ENCODE measurements at regions of chr7 and their contacts with region 1.

Region 1: DNA sequence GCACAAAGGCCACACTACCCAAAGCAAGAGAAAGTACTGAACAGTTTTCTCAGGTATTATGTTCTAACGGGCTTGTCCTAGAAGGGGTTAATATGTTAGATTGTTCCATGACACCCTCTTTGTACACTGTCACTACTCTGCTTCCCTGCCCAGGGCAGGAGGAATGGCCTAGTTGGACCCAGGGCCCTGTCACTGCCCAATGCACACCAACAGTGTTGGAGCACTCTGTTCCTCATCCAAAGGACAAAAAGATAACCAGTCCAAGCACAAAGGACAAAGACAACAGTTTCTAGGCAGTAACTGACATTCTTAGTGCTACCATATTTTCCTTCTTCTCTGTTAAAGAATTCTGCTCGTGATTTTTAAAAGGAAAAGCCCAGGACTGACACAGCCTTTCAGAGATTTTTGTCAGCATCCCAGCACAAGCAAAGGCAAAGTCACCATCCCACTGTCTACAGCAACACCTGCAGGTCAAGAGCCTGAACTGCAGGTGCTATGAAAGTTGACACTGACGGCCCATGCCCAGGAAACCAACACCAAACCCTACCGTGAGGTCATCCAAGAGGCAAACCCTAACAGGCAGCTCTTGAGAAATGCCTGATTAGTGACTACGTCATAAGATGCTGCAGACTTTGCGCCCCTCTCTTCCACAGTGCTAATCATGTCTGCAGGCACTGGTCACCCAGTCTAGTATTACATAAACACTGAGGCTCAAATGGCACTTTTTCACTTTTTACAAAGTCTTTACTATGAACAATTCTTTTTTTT is 13.2 kb downstream of the NUDCD3 start:
- DNase-seq: peak; percentile 18 to 68 (median 58)
- ATAC-seq: peak; percentile 98
- H3K4me3 ChIP-seq: no peak overlapping the region
- H3K4me3 Mint-ChIP-seq: peak overlapping the region in 5 of 10 donors; percentile 1 to 32 (median 4)
- H3K27ac ChIP-seq: no peak overlapping the region
- H3K27ac Mint-ChIP-seq: peak overlapping the region in 7 of 9 donors; percentile 2 to 93 (median 78)
- H3K4me1 ChIP-seq: peaks cover 0 to 15% of the 10 kb centered on the region in 2 donors
- H3K4me1 Mint-ChIP-seq: peaks cover 26 to 86% (median 71%) of the 10 kb centered on the region in 7 donors
- H3K27me3 ChIP-seq: no peaks in the 10 kb centered on the region
- H3K27me3 Mint-ChIP-seq: no peaks in the 10 kb centered on the region

Region 2: GRCh38 chr7:44072364-44073231 is 404.6 kb before region 1 on chr7:
- CTCF ChIA-PET with region 1: no interaction called
- POLR2A ChIA-PET with region 1: no interaction called
- intact Hi-C with region 1: loop called in 1 of 2 experiments (anchors 5 kb)
- DNase-seq: peak in 2 of 9 donors; percentile 26 to 36
- ATAC-seq: peak; percentile 46
- H3K4me3 ChIP-seq: no peak overlapping the region
- H3K4me3 Mint-ChIP-seq: no peak overlapping the region
- H3K27ac ChIP-seq: no peak overlapping the region
- H3K27ac Mint-ChIP-seq: peak overlapping the region in 7 of 9 donors; percentile 9 to 77 (median 60)
- H3K4me1 ChIP-seq: no peaks in the 10 kb centered on the region
- H3K4me1 Mint-ChIP-seq: peaks cover 2 to 34% (median 18%) of the 10 kb centered on the region in 7 donors
- H3K27me3 ChIP-seq: no peaks in the 10 kb centered on the region
- H3K27me3 Mint-ChIP-seq: no peaks in the 10 kb centered on the region

Region 3: GRCh38 chr7:44213877-44214388 is 263.3 kb before region 1 on chr7:
- CTCF ChIA-PET with region 1: no interaction called
- POLR2A ChIA-PET with region 1: no interaction called
- intact Hi-C with region 1: loop called in 1 of 2 experiments (anchors 1 kb)
- DNase-seq: no peak
- ATAC-seq: no peak
- H3K4me3 ChIP-seq: no peak overlapping the region
- H3K4me3 Mint-ChIP-seq: no peak overlapping the region
- H3K27ac ChIP-seq: no peak overlapping the region
- H3K27ac Mint-ChIP-seq: peak overlapping the region in 3 of 9 donors; percentile 4 to 36 (median 14)
- H3K4me1 ChIP-seq: no peaks in the 10 kb centered on the region
- H3K4me1 Mint-ChIP-seq: peaks cover 0 to 1% (median 0%) of the 10 kb centered on the region in 7 donors
- H3K27me3 ChIP-seq: no peaks in the 10 kb centered on the region
- H3K27me3 Mint-ChIP-seq: no peaks in the 10 kb centered on the region

Region 4: DNA sequence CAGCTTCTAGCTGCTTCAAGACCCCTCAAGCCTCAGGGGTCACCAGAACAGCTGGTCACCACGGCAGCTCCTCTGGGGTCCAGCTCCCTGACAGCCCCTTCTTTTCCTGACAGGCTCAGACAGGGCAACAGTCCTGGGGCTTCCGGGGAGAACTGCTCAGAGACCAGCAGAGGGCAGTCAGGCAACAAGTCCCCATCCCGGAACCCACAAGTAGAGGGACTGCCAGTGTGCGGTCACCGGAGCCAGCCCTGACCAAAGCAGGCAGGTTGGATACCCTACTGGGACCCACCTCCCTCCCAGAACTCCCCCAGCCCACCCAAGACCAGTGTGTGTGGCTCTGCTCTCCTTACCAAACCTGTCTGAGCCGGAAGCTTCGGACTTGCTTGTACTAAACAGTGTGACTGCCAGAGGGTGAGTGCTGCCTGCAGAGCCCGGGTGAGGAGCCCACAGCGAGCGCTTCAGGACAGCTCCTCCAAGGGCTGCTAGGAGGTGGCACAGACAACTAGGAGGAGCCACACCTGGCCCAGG is 236.2 kb before region 1 on chr7:
- CTCF ChIA-PET with region 1: interaction called, 8 read pairs
- POLR2A ChIA-PET with region 1: no interaction called
- intact Hi-C with region 1: loop called (anchors 1 kb)
- DNase-seq: peak; percentile 40 to 70 (median 66)
- ATAC-seq: peak; percentile 81
- H3K4me3 ChIP-seq: peak overlapping the region; percentile 27
- H3K4me3 Mint-ChIP-seq: peak overlapping the region in 8 of 10 donors; percentile 37 to 69 (median 50)
- H3K27ac ChIP-seq: no peak overlapping the region
- H3K27ac Mint-ChIP-seq: peak overlapping the region in 2 of 9 donors; percentile 39 to 62
- H3K4me1 ChIP-seq: no peaks in the 10 kb centered on the region
- H3K4me1 Mint-ChIP-seq: peaks cover 0 to 4% (median 0%) of the 10 kb centered on the region in 7 donors
- H3K27me3 ChIP-seq: no peaks in the 10 kb centered on the region
- H3K27me3 Mint-ChIP-seq: peaks cover 0 to 3% (median 0%) of the 10 kb centered on the region in 5 donors

Region 5: GRCh38 chr7:44257618-44258422 is 219.4 kb before region 1 on chr7:
- CTCF ChIA-PET with region 1: no interaction called
- POLR2A ChIA-PET with region 1: no interaction called
- intact Hi-C with region 1: loop called in 1 of 2 experiments (anchors 5 kb)
- DNase-seq: peak; percentile 44 to 75 (median 67)
- ATAC-seq: peak; percentile 83
- H3K4me3 ChIP-seq: peak overlapping the region; percentile 10
- H3K4me3 Mint-ChIP-seq: peak overlapping the region; percentile 22 to 87 (median 75)
- H3K27ac ChIP-seq: peak overlapping the region; percentile 79
- H3K27ac Mint-ChIP-seq: peak overlapping the region; percentile 82 to 96 (median 94)
- H3K4me1 ChIP-seq: peaks cover 17 to 20% of the 10 kb centered on the region in 2 donors
- H3K4me1 Mint-ChIP-seq: peaks cover 13 to 29% (median 26%) of the 10 kb centered on the region in 7 donors
- H3K27me3 ChIP-seq: no peaks in the 10 kb centered on the region
- H3K27me3 Mint-ChIP-seq: no peaks in the 10 kb centered on the region

Region 6: GRCh38 chr7:44348300-44348699 is 128.9 kb before region 1 on chr7:
- CTCF ChIA-PET with region 1: no interaction called
- POLR2A ChIA-PET with region 1: no interaction called
- intact Hi-C with region 1: loop called (anchors 1 kb)
- DNase-seq: peak in 1 of 9 donors; percentile 12
- ATAC-seq: no peak
- H3K4me3 ChIP-seq: no peak overlapping the region
- H3K4me3 Mint-ChIP-seq: no peak overlapping the region
- H3K27ac ChIP-seq: no peak overlapping the region
- H3K27ac Mint-ChIP-seq: no peak overlapping the region
- H3K4me1 ChIP-seq: no peaks in the 10 kb centered on the region
- H3K4me1 Mint-ChIP-seq: no peaks in the 10 kb centered on the region
- H3K27me3 ChIP-seq: no peaks in the 10 kb centered on the region
- H3K27me3 Mint-ChIP-seq: peaks cover 18 to 49% (median 35%) of the 10 kb centered on the region in 5 donors

Region 7: DNA sequence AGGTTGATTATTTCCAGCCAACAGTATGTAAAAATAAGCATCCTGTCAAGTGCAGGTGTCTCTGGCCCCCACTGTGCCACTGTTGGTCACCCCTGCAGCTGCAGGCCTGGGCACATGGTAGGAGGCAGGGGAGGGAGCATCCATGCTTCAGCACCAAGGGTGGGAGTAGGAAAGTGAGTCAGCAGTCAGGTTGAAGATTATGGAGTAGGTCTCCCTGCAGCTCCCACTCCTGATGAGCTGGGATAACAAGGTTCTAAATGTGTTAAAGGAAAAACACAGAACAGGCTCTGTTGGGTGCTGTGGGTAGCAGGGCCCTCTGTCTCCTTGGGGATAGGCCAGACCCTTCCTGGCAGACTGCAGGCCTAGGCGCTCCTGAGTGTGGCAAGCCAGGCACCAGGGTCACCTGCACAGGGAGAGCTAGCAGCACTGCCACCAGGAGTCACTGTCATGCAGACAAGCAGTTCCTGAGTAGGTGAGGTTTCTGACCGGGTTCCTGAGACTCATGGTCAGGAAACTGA is 46.1 kb before region 1 on chr7:
- CTCF ChIA-PET with region 1: interaction called, 3 read pairs
- POLR2A ChIA-PET with region 1: no interaction called
- intact Hi-C with region 1: loop called (anchors 1 to 2 kb)
- DNase-seq: peak in 3 of 9 donors; percentile 8 to 14 (median 12)
- ATAC-seq: peak; percentile 34
- H3K4me3 ChIP-seq: no peak overlapping the region
- H3K4me3 Mint-ChIP-seq: no peak overlapping the region
- H3K27ac ChIP-seq: no peak overlapping the region
- H3K27ac Mint-ChIP-seq: peak overlapping the region in 5 of 9 donors; percentile 36 to 86 (median 62)
- H3K4me1 ChIP-seq: no peaks in the 10 kb centered on the region
- H3K4me1 Mint-ChIP-seq: peaks cover 18 to 69% (median 60%) of the 10 kb centered on the region in 7 donors
- H3K27me3 ChIP-seq: no peaks in the 10 kb centered on the region
- H3K27me3 Mint-ChIP-seq: no peaks in the 10 kb centered on the region

Region 8: DNA sequence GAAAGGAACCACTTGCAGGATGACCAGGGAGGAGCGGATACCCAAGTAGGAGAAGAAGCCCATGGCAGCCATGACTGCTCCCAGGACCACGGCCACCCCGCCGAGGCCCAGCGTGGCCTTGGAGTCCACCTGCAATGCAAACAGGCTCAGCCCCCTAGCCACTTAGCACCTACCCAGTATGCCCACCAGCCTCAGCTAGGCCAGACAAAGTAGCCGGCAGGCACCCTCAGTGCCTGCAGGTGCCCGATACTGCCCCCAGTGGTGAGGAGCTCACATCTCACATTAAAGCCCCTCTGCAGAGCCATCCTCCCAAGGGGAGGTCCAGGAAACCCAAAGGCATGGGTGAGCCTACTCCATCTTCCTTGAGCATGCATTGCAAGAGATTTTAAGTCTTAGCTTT is 57.3 kb after region 1 on chr7:
- CTCF ChIA-PET with region 1: no interaction called
- POLR2A ChIA-PET with region 1: no interaction called
- intact Hi-C with region 1: no loop called
- DNase-seq: peak in 8 of 9 donors; percentile 7 to 52 (median 20)
- ATAC-seq: peak; percentile 77
- H3K4me3 ChIP-seq: no peak overlapping the region
- H3K4me3 Mint-ChIP-seq: no peak overlapping the region
- H3K27ac ChIP-seq: no peak overlapping the region
- H3K27ac Mint-ChIP-seq: no peak overlapping the region
- H3K4me1 ChIP-seq: no peaks in the 10 kb centered on the region
- H3K4me1 Mint-ChIP-seq: peaks cover 0 to 2% (median 0%) of the 10 kb centered on the region in 7 donors
- H3K27me3 ChIP-seq: no peaks in the 10 kb centered on the region
- H3K27me3 Mint-ChIP-seq: no peaks in the 10 kb centered on the region